ENCODE measurements at regions of chr2 and their contacts with region 1.

Region 1: GRCh38 chr2:191533693-191534180 is 144.2 kb upstream of the NABP1 start:
- DNase-seq: no peak
- H3K4me3 ChIP-seq: no peak overlapping the region
- H3K27ac ChIP-seq: no peak overlapping the region
- H3K4me1 ChIP-seq: no peaks in the 10 kb centered on the region
- H3K27me3 ChIP-seq: no peaks in the 10 kb centered on the region
- CTCF ChIP-seq: no peak

Region 2: DNA sequence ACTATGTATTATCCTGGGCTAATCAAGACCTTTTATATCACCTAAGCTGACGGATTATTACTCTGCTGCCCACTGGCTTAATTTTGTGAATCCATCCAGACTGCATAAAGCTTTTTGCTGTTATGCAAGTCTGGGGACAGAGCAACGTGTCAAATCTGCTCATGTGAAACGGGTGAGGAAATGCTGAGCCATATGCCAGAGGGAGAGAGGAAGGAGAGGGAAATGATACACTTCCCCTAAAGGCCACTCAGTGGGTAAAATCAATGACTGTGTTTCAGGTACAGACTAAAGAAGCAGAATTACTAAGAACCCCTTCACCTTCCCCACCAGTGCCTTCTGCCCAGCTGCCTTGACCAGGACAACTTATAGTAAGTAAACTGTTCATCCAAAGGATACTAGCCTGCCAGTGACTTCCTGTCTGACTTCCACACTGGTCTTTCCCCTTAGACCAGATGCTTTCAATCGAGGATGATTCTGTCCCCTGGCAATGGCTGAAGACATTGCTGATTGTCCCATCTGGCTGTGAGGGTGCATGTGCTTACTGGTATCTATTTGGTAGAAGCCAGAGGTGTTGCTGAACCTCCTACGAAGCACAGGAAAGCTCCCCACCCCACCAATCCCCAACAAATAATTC is 562.7 kb before region 1 on chr2:
- CTCF ChIA-PET with region 1: no interaction called
- POLR2A ChIA-PET with region 1: no interaction called
- intact Hi-C with region 1: no loop called
- DNase-seq: no peak
- H3K4me3 ChIP-seq: no peak overlapping the region
- H3K27ac ChIP-seq: no peak overlapping the region
- H3K4me1 ChIP-seq: no peaks in the 10 kb centered on the region
- H3K27me3 ChIP-seq: no peaks in the 10 kb centered on the region
- CTCF ChIP-seq: no peak

Region 3: GRCh38 chr2:192029089-192029488 is 495.4 kb after region 1 on chr2:
- CTCF ChIA-PET with region 1: interaction called, 19 read pairs
- POLR2A ChIA-PET with region 1: no interaction called
- intact Hi-C with region 1: no loop called
- DNase-seq: no peak
- H3K4me3 ChIP-seq: no peak overlapping the region
- H3K27ac ChIP-seq: no peak overlapping the region
- H3K4me1 ChIP-seq: no peaks in the 10 kb centered on the region
- H3K27me3 ChIP-seq: no peaks in the 10 kb centered on the region
- CTCF ChIP-seq: no peak

Measured in PC-9 (cell line).